ENCODE measurements at regions of chr1 and their contacts with region 1.

Region 1: DNA sequence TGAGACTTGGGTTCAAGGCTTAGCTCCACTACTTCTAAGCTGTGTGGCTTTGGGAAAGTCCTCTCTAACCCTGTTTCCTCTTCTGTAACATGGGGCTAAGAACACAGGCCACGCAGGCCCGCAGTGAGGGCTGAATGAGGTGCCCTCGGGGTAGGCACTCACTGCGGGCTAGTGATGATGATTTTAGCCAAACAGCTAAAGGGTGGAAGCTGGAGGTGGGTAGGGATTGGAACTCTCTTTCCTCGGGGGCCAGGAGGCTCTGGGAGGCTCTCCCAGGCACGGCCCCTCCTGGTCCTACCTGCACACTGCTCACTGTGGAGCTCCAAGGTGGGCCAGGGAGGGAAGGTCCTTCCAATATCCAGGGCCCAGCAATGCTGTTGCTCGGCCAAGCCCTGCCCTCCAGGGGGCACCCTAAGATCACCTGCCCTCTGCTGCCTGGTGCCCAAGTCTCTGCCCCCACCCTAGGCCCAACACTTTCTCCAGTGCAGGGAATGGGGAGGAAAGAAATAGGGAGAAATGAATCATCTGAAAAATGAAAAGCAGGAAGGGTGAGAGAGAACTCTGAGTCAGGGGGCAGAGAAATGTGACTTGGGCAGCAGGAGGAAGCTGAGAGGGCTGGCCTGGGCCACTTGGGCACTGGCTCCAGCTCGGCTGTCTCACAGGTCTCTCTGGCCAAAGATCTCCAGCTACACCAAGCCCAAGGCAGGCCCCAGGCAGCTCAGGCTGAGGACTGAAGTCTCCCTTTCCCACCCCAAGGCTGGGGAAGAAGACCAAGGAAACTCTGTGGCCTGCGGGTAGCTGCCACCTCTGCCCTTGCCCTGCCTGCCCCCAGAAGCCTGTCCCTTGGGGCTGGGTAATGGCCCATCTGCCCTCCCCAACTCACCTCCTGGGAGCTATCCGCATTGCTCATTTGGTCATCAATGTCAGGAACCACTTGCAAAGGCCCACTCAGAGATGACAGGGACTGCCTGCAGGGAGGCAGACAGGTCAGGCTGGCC is 19.3 kb upstream of the EVA1B start:
- DNase-seq: peak; percentile 36 to 80 (median 68)
- ATAC-seq: peak; percentile 87
- H3K4me3 ChIP-seq: no peak overlapping the region
- H3K4me3 Mint-ChIP-seq: no peak overlapping the region
- H3K27ac ChIP-seq: no peak overlapping the region
- H3K27ac Mint-ChIP-seq: no peak overlapping the region
- H3K4me1 ChIP-seq: peaks cover 3% of the 10 kb centered on the region
- H3K4me1 Mint-ChIP-seq: peaks cover 13% of the 10 kb centered on the region
- H3K27me3 ChIP-seq: no peaks in the 10 kb centered on the region
- H3K27me3 Mint-ChIP-seq: no peaks in the 10 kb centered on the region
- CTCF ChIP-seq: peak; percentile 69

Region 2: GRCh38 chr1:36166938-36167910 is 175.6 kb before region 1 on chr1:
- CTCF ChIA-PET with region 1: no interaction called
- POLR2A ChIA-PET with region 1: no interaction called
- intact Hi-C with region 1: no loop called
- DNase-seq: no peak
- ATAC-seq: no peak
- H3K4me3 ChIP-seq: no peak overlapping the region
- H3K4me3 Mint-ChIP-seq: no peak overlapping the region
- H3K27ac ChIP-seq: no peak overlapping the region
- H3K27ac Mint-ChIP-seq: peak overlapping the region; percentile 89
- H3K4me1 ChIP-seq: peaks cover 25% of the 10 kb centered on the region
- H3K4me1 Mint-ChIP-seq: peaks cover 57% of the 10 kb centered on the region
- H3K27me3 ChIP-seq: no peaks in the 10 kb centered on the region
- H3K27me3 Mint-ChIP-seq: no peaks in the 10 kb centered on the region
- CTCF ChIP-seq: no peak

Region 3: DNA sequence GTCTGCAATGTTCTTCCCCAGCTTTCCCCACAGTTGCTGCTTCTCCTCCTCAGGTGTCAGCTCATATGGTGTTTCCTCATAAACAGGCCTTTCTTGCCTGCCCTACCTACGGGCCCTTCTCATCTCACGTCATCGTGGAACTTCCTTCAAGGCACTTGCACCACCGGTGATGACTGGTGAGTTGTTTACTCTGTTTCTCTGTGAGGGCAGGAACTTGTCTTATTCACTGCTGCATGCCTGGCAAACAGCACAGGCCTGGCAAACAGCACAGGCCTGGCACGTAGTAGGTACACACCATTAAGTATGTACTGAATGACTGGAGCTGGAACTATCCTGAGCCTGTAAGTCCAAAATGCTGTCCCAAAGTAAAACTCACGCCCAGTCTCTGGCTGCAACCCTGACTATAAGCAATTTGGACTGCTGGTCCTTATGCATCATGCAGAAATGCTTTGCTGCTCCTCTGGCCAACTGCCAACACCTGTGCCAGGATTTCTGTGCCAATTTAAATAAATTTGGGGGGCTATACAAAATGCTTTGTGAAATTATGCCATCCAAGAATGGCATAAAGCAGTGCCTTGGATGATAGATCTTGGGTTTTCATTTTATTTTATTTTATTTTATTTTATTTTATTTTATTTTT is 17.3 kb after region 1 on chr1:
- CTCF ChIA-PET with region 1: interaction called, 139 read pairs
- POLR2A ChIA-PET with region 1: no interaction called
- intact Hi-C with region 1: no loop called
- DNase-seq: peak in 2 of 9 experiments; percentile 42 to 48
- ATAC-seq: peak; percentile 68
- H3K4me3 ChIP-seq: no peak overlapping the region
- H3K4me3 Mint-ChIP-seq: no peak overlapping the region
- H3K27ac ChIP-seq: no peak overlapping the region
- H3K27ac Mint-ChIP-seq: peak overlapping the region; percentile 75
- H3K4me1 ChIP-seq: peaks cover 8% of the 10 kb centered on the region
- H3K4me1 Mint-ChIP-seq: peaks cover 6% of the 10 kb centered on the region
- H3K27me3 ChIP-seq: no peaks in the 10 kb centered on the region
- H3K27me3 Mint-ChIP-seq: no peaks in the 10 kb centered on the region
- CTCF ChIP-seq: no peak

Region 4: DNA sequence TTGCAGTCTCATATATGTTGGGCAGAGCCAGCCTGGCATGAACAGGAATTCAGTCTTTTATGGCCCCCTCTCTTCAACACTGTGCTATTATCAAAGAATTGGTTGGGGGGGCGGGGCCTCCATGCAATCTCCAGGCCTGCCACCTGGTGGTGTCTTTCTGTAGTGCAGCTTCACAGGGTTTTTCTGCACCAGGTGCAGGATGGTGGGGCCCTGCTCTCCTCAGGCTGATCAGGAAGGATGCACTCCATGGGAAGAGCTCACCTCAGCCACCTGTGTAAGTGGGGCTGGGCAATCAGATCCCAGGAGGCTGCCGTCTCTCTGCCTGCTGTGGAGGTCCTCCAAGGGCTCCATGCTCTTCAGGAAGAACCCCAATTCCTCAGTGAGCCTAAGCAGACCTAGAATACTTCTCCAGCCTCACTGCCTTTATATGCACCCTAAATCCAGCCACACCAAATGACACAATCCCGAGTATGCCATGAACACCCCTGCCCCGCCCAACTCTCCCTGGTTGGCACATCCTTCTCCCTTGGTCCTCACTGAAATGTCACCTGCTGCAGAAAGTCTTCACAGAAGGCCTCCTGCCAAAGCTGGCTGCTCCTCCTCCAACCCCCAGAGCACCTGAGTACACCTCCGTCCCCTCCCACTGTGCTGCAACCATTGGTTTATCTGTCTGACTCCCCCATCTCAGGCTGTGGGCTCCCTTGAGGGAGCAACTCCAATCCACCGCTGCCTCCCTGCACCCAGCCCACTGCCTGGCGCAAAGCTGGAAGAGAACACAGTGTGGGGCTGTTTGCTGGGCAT is 26.5 kb after region 1 on chr1:
- CTCF ChIA-PET with region 1: interaction called, 139 read pairs
- POLR2A ChIA-PET with region 1: interaction called, 9 read pairs
- intact Hi-C with region 1: loop called (anchors 1 kb)
- DNase-seq: peak; percentile 75 to 91 (median 85)
- ATAC-seq: peak; percentile 62
- H3K4me3 ChIP-seq: no peak overlapping the region
- H3K4me3 Mint-ChIP-seq: no peak overlapping the region
- H3K27ac ChIP-seq: peak overlapping the region in 1 of 2 experiments; percentile 25
- H3K27ac Mint-ChIP-seq: peak overlapping the region; percentile 79
- H3K4me1 ChIP-seq: peaks cover 55% of the 10 kb centered on the region
- H3K4me1 Mint-ChIP-seq: peaks cover 68% of the 10 kb centered on the region
- H3K27me3 ChIP-seq: no peaks in the 10 kb centered on the region
- H3K27me3 Mint-ChIP-seq: no peaks in the 10 kb centered on the region
- CTCF ChIP-seq: peak; percentile 88

Region 5: GRCh38 chr1:36377791-36378492 is 35.2 kb after region 1 on chr1:
- CTCF ChIA-PET with region 1: interaction called, 30 read pairs
- POLR2A ChIA-PET with region 1: no interaction called
- intact Hi-C with region 1: no loop called
- DNase-seq: peak in 1 of 9 experiments; percentile 24
- ATAC-seq: no peak
- H3K4me3 ChIP-seq: no peak overlapping the region
- H3K4me3 Mint-ChIP-seq: no peak overlapping the region
- H3K27ac ChIP-seq: peak overlapping the region in 1 of 2 experiments; percentile 72
- H3K27ac Mint-ChIP-seq: peak overlapping the region; percentile 87
- H3K4me1 ChIP-seq: peaks cover 43% of the 10 kb centered on the region
- H3K4me1 Mint-ChIP-seq: peaks cover 74% of the 10 kb centered on the region
- H3K27me3 ChIP-seq: no peaks in the 10 kb centered on the region
- H3K27me3 Mint-ChIP-seq: no peaks in the 10 kb centered on the region
- CTCF ChIP-seq: no peak

Region 6: GRCh38 chr1:36411674-36412520 is 69.1 kb after region 1 on chr1:
- CTCF ChIA-PET with region 1: interaction called, 108 read pairs
- POLR2A ChIA-PET with region 1: no interaction called
- intact Hi-C with region 1: no loop called
- DNase-seq: peak in 4 of 9 experiments; percentile 11 to 68 (median 56)
- ATAC-seq: peak; percentile 96
- H3K4me3 ChIP-seq: no peak overlapping the region
- H3K4me3 Mint-ChIP-seq: no peak overlapping the region
- H3K27ac ChIP-seq: no peak overlapping the region
- H3K27ac Mint-ChIP-seq: peak overlapping the region; percentile 32
- H3K4me1 ChIP-seq: peaks cover 4% of the 10 kb centered on the region
- H3K4me1 Mint-ChIP-seq: peaks cover 12% of the 10 kb centered on the region
- H3K27me3 ChIP-seq: no peaks in the 10 kb centered on the region
- H3K27me3 Mint-ChIP-seq: no peaks in the 10 kb centered on the region
- CTCF ChIP-seq: no peak

Region 7: DNA sequence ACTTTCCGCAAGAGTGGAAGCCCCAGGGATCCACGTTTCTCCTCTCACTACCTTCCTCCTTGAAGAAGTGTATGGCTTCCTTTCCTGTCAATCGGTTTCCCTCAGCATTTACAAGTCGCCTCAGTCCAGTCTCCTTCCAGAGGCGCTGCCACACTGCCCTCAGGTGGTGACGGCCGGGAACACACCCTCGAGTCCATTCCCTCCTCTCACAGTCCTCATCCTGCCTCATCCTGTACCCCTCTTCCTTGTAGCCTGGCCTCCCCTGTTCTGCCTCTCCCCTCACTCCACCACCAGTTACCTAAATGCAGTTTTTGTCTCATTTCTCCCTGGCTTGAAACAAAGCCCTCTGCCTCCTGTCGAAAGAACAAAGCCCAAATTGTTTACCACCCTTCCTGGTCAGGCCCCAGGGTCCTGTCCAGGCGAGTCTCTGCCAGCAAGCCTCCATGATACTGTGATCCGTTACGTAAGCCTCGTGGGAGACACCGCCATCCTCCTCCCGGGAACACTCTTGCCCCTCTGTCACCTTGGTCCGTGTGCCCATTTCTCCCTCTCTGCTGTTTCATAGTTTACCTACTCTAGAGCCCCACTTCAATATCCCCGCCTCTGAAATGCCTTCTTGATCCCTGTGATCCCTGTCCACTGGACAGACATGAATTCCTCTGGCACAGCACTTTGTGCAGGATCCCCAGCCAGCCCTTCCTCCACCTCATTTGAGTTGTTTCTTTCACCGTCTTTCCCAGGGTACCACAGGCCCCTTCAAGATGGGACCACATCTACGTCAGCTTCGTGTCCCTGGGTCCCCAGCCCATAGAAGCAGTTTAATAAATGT is 78.3 kb after region 1 on chr1:
- CTCF ChIA-PET with region 1: interaction called, 108 read pairs
- POLR2A ChIA-PET with region 1: interaction called, 3 read pairs
- intact Hi-C with region 1: loop called (anchors 1 kb)
- DNase-seq: peak; percentile 82 to 96 (median 89)
- ATAC-seq: peak; percentile 100
- H3K4me3 ChIP-seq: peak overlapping the region in 1 of 2 experiments; percentile 7
- H3K4me3 Mint-ChIP-seq: peak overlapping the region; percentile 64
- H3K27ac ChIP-seq: peak overlapping the region in 1 of 2 experiments; percentile 60
- H3K27ac Mint-ChIP-seq: peak overlapping the region; percentile 88
- H3K4me1 ChIP-seq: peaks cover 18% of the 10 kb centered on the region
- H3K4me1 Mint-ChIP-seq: peaks cover 23% of the 10 kb centered on the region
- H3K27me3 ChIP-seq: no peaks in the 10 kb centered on the region
- H3K27me3 Mint-ChIP-seq: no peaks in the 10 kb centered on the region
- CTCF ChIP-seq: peak; percentile 87